Mammary epithelial cell (primary cell): ENCODE measurements at regions of chr12 and their contacts with region 1.

Region 1: DNA sequence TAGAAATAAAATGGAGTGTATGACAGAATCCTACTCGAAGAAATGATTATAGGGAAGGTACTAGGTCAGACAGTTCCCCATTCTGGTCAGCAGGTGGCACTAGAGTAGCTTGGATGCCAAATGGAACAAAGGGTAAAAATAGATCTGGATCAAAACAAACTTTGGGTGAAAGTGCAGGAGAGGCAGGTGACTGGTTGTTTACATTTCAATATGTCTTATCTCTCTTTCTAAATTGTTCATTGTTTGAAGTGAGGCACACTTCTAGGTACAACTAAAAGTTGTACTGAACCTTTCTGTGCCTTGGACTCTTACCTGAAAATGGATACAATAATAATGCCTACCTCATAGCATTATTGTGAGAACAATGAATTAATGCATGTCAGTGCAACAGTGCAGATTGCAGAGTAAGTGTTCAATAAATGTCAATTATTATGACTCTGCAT is 62.0 kb upstream of the OSBPL8 start:
- DNase-seq: peak; percentile 48
- H3K4me3 ChIP-seq: no peak overlapping the region
- H3K27ac ChIP-seq: no peak overlapping the region
- H3K4me1 ChIP-seq: no peaks in the 10 kb centered on the region
- H3K27me3 ChIP-seq: no peaks in the 10 kb centered on the region
- CTCF ChIP-seq: peak; percentile 90 to 96

Region 2: GRCh38 chr12:76799362-76799761 is 177.8 kb after region 1 on chr12:
- CTCF ChIA-PET with region 1: no interaction called
- dilution Hi-C with region 1: no loop called
- in situ Hi-C with region 1: loop called (anchors 5 kb)
- intact Hi-C with region 1: no loop called
- DNase-seq: peak; percentile 44
- H3K4me3 ChIP-seq: peak overlapping the region in 1 of 3 experiments; percentile 12
- H3K27ac ChIP-seq: no peak overlapping the region
- H3K4me1 ChIP-seq: peaks cover 7% of the 10 kb centered on the region
- H3K27me3 ChIP-seq: no peaks in the 10 kb centered on the region
- CTCF ChIP-seq: no peak

Region 3: DNA sequence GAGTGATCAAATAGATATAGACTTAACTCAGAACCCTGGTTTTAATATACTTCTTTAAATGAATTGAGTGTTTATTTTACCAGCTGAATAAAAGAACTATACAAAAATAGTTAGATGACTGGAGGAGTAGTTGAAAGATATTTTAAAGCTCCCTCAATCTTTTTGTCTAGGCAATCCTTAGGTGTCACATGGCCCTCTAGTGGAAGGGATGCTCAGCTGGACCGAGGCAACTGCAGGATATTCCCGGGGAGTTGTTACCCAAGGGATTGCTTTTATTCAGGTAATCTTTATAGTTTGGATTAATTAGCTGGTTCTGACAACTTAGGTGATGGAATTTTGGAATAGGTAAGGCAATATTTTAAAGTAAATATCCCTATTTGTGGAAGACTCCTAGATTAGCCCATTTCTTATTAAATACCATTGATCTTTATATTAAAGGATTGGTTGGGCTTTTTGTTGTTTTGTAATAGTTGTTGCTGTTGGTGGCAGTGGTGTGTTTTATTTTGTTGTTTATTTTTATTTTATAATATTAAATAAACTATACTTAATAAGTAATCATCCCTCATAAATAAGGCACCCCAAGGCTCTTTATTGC is 199.4 kb after region 1 on chr12:
- CTCF ChIA-PET with region 1: no interaction called
- dilution Hi-C with region 1: no loop called
- in situ Hi-C with region 1: no loop called
- intact Hi-C with region 1: loop called (anchors 1 kb)
- DNase-seq: peak; percentile 29
- H3K4me3 ChIP-seq: no peak overlapping the region
- H3K27ac ChIP-seq: no peak overlapping the region
- H3K4me1 ChIP-seq: no peaks in the 10 kb centered on the region
- H3K27me3 ChIP-seq: no peaks in the 10 kb centered on the region
- CTCF ChIP-seq: peak; percentile 74

Region 4: GRCh38 chr12:76927170-76927784 is 305.7 kb after region 1 on chr12:
- CTCF ChIA-PET with region 1: no interaction called
- dilution Hi-C with region 1: no loop called
- in situ Hi-C with region 1: no loop called
- intact Hi-C with region 1: loop called (anchors 1 kb)
- DNase-seq: peak; percentile 25
- H3K4me3 ChIP-seq: no peak overlapping the region
- H3K27ac ChIP-seq: no peak overlapping the region
- H3K4me1 ChIP-seq: no peaks in the 10 kb centered on the region
- H3K27me3 ChIP-seq: no peaks in the 10 kb centered on the region
- CTCF ChIP-seq: peak; percentile 65 to 80